Naive thymus-derived CD4-positive, alpha-beta T cell (primary cell): ENCODE measurements at regions of chr1 and their contacts with region 1.

Region 1: DNA sequence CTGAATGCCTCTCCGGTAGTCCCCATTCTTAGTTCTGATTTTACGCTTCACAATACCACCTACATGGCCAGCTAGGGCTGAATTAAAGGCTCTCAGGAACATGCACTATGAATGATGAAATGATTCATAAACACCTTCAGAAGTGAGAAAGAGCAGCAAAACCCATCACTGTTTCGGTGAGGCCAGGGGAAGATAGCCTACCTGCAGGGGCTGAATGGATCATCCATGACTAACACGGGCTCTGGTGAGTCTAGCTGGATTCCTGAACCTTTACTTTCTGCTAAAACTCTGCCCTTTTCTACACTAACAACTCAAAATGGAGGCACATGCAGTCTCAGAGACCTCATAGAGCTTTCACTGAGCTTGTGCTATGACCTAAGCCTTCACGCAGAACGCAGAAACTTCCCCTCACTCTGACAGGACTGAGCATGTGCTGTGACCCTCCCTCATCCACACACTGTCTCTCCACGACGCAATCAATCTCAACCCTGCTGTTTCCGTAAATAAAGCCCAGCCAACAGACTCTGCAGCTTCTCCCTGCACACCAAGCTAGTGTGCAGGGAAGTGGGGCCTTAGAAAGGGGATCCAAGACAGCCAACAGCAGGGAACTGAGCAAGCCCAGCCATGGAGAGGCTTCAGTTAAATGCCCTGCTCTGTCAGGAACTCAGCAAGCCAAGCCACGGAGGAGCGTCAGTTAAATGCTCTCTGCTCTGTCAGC is 207.8 kb downstream of the SLC45A1 start:
- DNase-seq: peak; percentile 31 to 95 (median 88)
- ATAC-seq: peak; percentile 96
- H3K4me3 ChIP-seq: peak overlapping the region; percentile 60
- H3K4me3 Mint-ChIP-seq: no peak overlapping the region
- H3K27ac ChIP-seq: peak overlapping the region; percentile 95
- H3K27ac Mint-ChIP-seq: no peak overlapping the region
- H3K4me1 ChIP-seq: peaks cover 12 to 30% of the 10 kb centered on the region in 2 donors
- H3K4me1 Mint-ChIP-seq: peaks cover 22 to 57% (median 35%) of the 10 kb centered on the region in 7 donors
- H3K27me3 ChIP-seq: no peaks in the 10 kb centered on the region
- H3K27me3 Mint-ChIP-seq: no peaks in the 10 kb centered on the region

Region 2: DNA sequence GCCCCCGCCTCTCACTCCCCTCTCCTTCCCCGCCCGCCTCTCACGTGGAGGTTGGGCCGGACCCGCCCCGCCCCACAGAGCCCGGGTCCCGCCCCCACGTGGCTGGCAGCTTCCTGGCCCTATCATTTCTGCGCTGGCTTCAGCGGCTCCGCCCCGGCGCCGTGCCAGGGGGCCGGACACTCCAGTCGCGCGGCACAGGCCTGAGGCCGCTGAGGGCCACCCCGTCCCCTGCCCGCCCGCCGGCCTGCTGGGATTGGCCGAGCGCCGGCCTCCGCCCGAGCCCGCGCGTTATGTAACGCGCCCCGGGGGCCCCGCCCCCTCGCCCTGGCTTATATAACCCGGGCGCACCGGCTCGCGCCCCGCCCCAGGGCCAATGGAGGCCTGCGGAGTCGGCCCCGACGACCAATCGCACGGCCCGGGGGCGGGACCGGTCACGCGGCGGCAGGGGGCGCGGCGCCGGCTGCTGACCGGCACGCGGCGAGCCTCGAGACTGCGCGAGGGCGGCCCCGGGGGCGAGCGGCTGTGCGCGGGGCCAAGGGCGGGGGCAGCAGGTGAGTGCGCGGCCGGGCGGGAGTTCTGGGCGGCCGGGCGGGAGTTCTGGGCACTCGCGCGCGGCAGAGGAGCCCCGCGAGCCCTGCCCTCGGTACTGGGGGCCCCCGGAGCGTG is 741.8 kb before region 1 on chr1 and contains the start of gene PER3:
- CTCF ChIA-PET with region 1: no interaction called
- POLR2A ChIA-PET with region 1: no interaction called
- intact Hi-C with region 1: loop called in 1 of 2 experiments (anchors 10 kb)
- DNase-seq: peak; percentile 84 to 97 (median 94)
- ATAC-seq: peak; percentile 93
- H3K4me3 ChIP-seq: peak within 1 kb of the TSS; percentile 58
- H3K4me3 Mint-ChIP-seq: peak within 1 kb of the TSS; percentile 67 to 85 (median 76)
- H3K27ac ChIP-seq: peak within 1 kb of the TSS; percentile 99
- H3K27ac Mint-ChIP-seq: peak within 1 kb of the TSS in 8 of 9 donors; percentile 63 to 91 (median 82)
- H3K4me1 ChIP-seq: peaks cover 8 to 17% of the 10 kb centered on the region in 2 donors
- H3K4me1 Mint-ChIP-seq: peaks cover 18 to 39% (median 28%) of the 10 kb centered on the region in 7 donors
- H3K27me3 ChIP-seq: no peaks in the 10 kb centered on the region
- H3K27me3 Mint-ChIP-seq: peaks cover 0 to 16% (median 0%) of the 10 kb centered on the region in 5 donors
- total RNA-seq, gene PER3: 2.2 to 10.4 (median 5.1) TPM

Region 3: DNA sequence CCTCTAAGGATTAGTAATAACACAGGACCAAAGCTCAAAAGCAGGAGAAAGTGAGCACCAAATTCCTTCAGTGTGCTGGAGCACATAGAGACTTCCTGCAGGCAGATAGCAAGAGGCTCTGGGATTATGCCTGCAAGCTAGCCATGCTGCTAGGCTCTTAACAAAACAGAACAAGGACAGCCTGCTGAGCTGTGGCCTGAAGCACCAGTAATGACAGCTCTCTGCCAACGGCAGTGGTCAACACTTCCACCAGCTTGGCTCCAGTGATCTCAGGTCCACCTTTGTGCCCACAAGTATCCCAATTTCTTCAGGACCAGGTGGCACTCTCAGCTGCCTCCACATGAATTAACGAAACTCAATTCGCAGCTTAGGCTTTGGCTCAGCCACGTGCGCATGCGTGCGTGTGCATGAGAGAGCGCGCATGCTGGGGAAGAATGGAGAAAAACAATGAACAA is 143.6 kb before region 1 on chr1:
- CTCF ChIA-PET with region 1: no interaction called
- POLR2A ChIA-PET with region 1: interaction called, 3 read pairs
- intact Hi-C with region 1: loop called in 1 of 2 experiments (anchors 5 kb)
- DNase-seq: no peak
- ATAC-seq: no peak
- H3K4me3 ChIP-seq: no peak overlapping the region
- H3K4me3 Mint-ChIP-seq: peak overlapping the region; percentile 19 to 87 (median 78)
- H3K27ac ChIP-seq: peak overlapping the region; percentile 52
- H3K27ac Mint-ChIP-seq: peak overlapping the region in 7 of 9 donors; percentile 23 to 98 (median 90)
- H3K4me1 ChIP-seq: peaks cover 30 to 61% of the 10 kb centered on the region in 2 donors
- H3K4me1 Mint-ChIP-seq: peaks cover 51 to 96% (median 91%) of the 10 kb centered on the region in 7 donors
- H3K27me3 ChIP-seq: no peaks in the 10 kb centered on the region
- H3K27me3 Mint-ChIP-seq: no peaks in the 10 kb centered on the region

Region 4: DNA sequence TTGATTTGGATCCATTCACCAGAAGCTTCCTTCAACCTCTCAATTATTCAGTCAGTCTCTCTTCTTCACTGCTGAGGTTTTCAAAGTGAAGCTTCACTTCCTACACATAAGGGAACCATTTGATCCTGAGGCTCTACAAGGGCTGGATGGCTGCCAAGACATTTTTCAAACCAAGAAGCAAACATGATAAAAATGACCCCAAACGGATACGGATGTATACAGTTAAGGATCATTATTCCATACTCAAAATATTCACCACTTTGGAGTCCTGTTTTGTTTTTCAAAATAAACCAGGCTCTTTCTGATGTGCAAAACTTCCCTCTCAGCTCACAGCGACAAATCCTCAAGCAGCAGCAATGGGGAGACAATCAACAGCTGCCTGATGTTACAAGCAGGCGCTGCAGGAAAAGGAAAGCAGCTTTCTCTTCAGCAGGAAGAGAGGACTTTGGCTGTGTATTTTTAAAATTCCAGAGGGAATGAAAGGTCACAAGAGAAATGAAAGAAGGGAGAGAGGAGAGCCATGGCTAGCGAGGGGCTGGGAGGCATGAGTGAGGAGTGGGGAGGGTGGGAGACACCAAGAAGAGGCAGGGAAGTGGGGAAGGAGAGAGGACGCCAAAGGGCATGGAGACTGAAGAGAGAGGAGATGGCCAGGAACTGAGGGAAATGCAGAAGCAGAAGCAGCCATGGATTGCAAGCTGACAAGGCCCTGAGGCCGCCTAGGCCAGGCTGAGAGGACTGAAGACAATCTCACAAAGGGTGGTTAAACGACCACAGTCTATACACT is 62.4 kb before region 1 on chr1:
- CTCF ChIA-PET with region 1: interaction called, 3 read pairs
- POLR2A ChIA-PET with region 1: no interaction called
- intact Hi-C with region 1: loop called in 1 of 2 experiments (anchors 5 kb)
- DNase-seq: peak in 7 of 9 donors; percentile 41 to 68 (median 61)
- ATAC-seq: peak; percentile 75
- H3K4me3 ChIP-seq: no peak overlapping the region
- H3K4me3 Mint-ChIP-seq: peak overlapping the region in 9 of 10 donors; percentile 35 to 80 (median 52)
- H3K27ac ChIP-seq: peak overlapping the region; percentile 43
- H3K27ac Mint-ChIP-seq: peak overlapping the region; percentile 54 to 90 (median 85)
- H3K4me1 ChIP-seq: peaks cover 0 to 31% of the 10 kb centered on the region in 2 donors
- H3K4me1 Mint-ChIP-seq: peaks cover 20 to 82% (median 63%) of the 10 kb centered on the region in 7 donors
- H3K27me3 ChIP-seq: no peaks in the 10 kb centered on the region
- H3K27me3 Mint-ChIP-seq: no peaks in the 10 kb centered on the region

Region 5: DNA sequence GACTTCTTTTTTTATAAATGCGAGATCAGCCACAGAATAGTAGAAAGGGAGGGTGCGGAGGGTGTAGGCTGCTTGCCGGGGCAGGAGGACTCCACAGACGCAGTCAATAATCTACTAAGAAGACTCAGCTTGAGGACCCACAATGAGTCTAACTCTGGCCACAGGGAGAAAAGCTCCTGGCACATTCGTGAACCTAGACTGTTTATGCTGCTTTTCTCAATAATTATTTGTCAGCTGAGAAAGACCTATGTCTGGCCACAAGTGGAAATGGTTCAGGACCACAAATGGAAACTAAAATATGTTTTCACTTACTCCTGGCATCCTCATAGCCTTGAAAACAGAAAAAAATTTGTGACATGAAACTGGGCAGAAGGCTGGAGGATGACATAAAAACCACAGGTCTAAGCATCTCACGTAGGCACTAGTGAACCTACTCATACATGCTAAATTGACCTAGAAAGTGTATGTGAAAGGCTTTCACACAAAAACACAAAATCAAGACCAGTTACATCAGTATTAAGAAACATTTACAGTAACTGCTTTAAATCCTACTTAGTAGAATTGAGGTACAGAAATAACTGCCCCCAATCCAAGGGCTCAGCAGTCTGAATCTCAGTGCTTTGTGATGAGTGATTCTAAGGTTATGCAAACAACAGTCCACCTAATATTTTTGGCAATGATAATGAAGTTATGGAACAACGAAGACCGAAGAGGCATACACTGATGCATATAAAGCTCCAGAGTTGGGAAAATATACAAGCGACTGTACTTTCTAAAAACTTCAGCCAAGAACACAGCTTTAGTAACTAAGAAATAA is 48.3 kb before region 1 on chr1:
- CTCF ChIA-PET with region 1: interaction called, 4 read pairs
- POLR2A ChIA-PET with region 1: interaction called, 5 read pairs
- intact Hi-C with region 1: loop called (anchors 2 to 5 kb)
- DNase-seq: no peak
- ATAC-seq: no peak
- H3K4me3 ChIP-seq: no peak overlapping the region
- H3K4me3 Mint-ChIP-seq: peak overlapping the region in 1 of 10 donors; percentile 23
- H3K27ac ChIP-seq: no peak overlapping the region
- H3K27ac Mint-ChIP-seq: peak overlapping the region in 7 of 9 donors; percentile 2 to 84 (median 55)
- H3K4me1 ChIP-seq: peaks cover 9 to 12% of the 10 kb centered on the region in 2 donors
- H3K4me1 Mint-ChIP-seq: peaks cover 17 to 58% (median 38%) of the 10 kb centered on the region in 7 donors
- H3K27me3 ChIP-seq: no peaks in the 10 kb centered on the region
- H3K27me3 Mint-ChIP-seq: no peaks in the 10 kb centered on the region

Region 6: DNA sequence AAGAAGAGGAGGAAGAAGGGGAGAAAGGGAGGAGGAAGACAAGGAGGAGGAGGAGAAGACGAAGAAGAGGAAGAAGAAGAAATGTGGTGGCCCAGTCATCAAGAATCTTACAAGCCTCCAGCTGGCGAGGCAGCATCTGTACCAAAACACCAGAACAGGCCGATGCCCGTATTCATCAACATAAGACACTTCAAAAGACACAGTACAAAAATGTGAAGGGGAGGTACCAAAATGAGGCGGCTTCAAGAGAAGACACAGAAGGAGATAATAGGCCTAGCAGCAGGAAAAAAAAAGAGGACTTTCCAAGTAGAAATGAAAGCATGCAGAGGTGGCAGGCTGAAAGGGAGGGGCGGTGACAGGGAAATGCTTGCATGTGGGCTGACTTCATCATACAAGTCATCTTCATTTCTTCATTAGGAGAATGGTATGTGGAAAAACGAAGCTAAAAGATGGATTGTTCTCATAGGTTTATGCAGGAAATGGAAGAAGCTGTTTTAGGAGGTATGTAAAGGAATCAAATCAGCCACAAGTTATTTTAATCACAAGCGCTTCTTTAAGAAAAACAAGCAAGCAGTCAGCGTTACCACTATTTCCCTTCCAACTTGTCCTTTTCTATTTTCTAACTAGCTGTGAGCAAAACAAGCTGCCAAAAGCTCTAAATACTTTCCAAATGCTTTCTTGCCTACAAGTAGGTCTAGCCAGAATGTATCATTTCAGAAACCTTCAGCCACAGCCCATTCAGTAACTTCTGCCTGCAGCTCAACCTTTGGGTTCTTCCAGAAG is 15.5 kb before region 1 on chr1:
- CTCF ChIA-PET with region 1: interaction called, 8 read pairs
- POLR2A ChIA-PET with region 1: interaction called, 30 read pairs
- intact Hi-C with region 1: loop called (anchors 1 kb)
- DNase-seq: peak in 8 of 9 donors; percentile 55 to 88 (median 78)
- ATAC-seq: peak; percentile 94
- H3K4me3 ChIP-seq: peak overlapping the region; percentile 2
- H3K4me3 Mint-ChIP-seq: peak overlapping the region; percentile 59 to 87 (median 74)
- H3K27ac ChIP-seq: peak overlapping the region; percentile 77
- H3K27ac Mint-ChIP-seq: peak overlapping the region; percentile 86 to 97 (median 91)
- H3K4me1 ChIP-seq: peaks cover 3 to 27% of the 10 kb centered on the region in 2 donors
- H3K4me1 Mint-ChIP-seq: peaks cover 30 to 81% (median 58%) of the 10 kb centered on the region in 7 donors
- H3K27me3 ChIP-seq: no peaks in the 10 kb centered on the region
- H3K27me3 Mint-ChIP-seq: no peaks in the 10 kb centered on the region

Region 7: GRCh38 chr1:8702850-8703810 is 177.4 kb after region 1 on chr1:
- CTCF ChIA-PET with region 1: no interaction called
- POLR2A ChIA-PET with region 1: interaction called, 3 read pairs
- intact Hi-C with region 1: loop called in 1 of 2 experiments (anchors 2 kb)
- DNase-seq: peak in 7 of 9 donors; percentile 22 to 83 (median 40)
- ATAC-seq: peak; percentile 72
- H3K4me3 ChIP-seq: peak overlapping the region; percentile 28
- H3K4me3 Mint-ChIP-seq: peak overlapping the region; percentile 79 to 92 (median 86)
- H3K27ac ChIP-seq: no peak overlapping the region
- H3K27ac Mint-ChIP-seq: peak overlapping the region in 6 of 9 donors; percentile 8 to 89 (median 48)
- H3K4me1 ChIP-seq: peaks cover 19 to 23% of the 10 kb centered on the region in 2 donors
- H3K4me1 Mint-ChIP-seq: peaks cover 19 to 53% (median 30%) of the 10 kb centered on the region in 7 donors
- H3K27me3 ChIP-seq: peaks cover 3 to 27% of the 10 kb centered on the region in 2 donors
- H3K27me3 Mint-ChIP-seq: peaks cover 9 to 56% (median 54%) of the 10 kb centered on the region in 5 donors